ENCODE measurements at regions of chr22 and their contacts with region 1.

Region 1: GRCh38 chr22:28488825-28489224 is 190.8 kb downstream of the TTC28 start:
- DNase-seq: no peak
- ATAC-seq: no peak
- H3K4me3 ChIP-seq: no peak overlapping the region
- H3K27ac ChIP-seq: no peak overlapping the region
- H3K4me1 ChIP-seq: no peaks in the 10 kb centered on the region
- H3K27me3 ChIP-seq: no peaks in the 10 kb centered on the region
- CTCF ChIP-seq: no peak
- POLR2A ChIP-seq: no peak

Region 2: GRCh38 chr22:28448625-28449024 is 40.2 kb before region 1 on chr22:
- intact Hi-C with region 1: loop called in 1 of 10 experiments (anchors 2 kb)
- DNase-seq: no peak
- ATAC-seq: no peak
- H3K4me3 ChIP-seq: no peak overlapping the region
- H3K27ac ChIP-seq: no peak overlapping the region
- H3K4me1 ChIP-seq: peaks cover 0 to 13% (median under 1%) of the 10 kb centered on the region in 12 donors
- H3K27me3 ChIP-seq: no peaks in the 10 kb centered on the region
- CTCF ChIP-seq: no peak
- POLR2A ChIP-seq: no peak

Region 3: DNA sequence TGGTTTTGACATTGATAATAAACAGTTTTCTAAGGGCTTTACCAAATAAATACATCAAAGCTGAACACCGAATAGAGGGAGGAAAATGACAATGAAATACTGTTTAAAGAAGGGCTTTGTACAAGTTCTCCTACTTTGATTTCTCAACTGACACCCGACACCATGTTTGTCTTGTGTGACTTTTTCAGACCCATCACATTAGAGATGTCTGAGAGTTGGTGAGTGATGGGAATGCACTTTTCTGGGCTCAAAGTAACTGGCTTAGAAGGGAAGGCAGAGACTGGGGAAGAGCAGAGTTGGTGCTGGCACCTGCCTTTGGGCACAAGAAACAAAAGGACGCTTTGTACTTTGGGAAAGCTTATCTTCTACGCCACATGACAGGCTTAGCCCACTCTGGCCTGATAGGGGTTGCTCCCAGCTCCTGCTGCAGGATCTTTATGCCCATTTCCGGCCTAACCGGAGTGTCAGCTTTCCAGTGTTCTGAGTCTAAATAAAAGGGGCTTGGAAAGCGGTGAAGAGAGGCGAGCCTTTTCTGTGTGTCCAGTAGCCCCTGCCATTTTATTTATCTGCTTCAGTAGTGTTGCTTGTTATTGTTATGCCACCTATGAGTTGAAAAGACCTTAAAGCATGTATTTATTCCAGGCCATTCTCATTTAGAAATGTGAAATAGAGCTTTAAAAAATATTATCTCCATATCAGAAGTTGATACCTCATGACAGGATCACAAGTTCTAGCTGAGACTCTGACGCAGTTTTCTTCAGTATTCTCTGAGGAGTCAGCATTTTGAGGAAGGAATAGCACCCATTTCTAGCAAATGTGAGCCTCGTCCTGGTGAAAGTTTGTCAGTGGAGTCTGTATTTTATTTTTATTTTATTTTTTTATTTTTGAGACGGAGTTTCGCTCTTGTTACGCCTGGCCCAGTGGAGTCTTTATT is 608.2 kb after region 1 on chr22:
- intact Hi-C with region 1: no loop called
- DNase-seq: peak in 4 of 5 donors; percentile 27 to 60 (median 38)
- ATAC-seq: peak; percentile 74 to 91 (median 88)
- H3K4me3 ChIP-seq: no peak overlapping the region
- H3K27ac ChIP-seq: peak overlapping the region in 10 of 12 donors; percentile 17 to 79 (median 54)
- H3K4me1 ChIP-seq: peaks cover 0 to 46% (median 18%) of the 10 kb centered on the region in 12 donors
- H3K27me3 ChIP-seq: no peaks in the 10 kb centered on the region
- CTCF ChIP-seq: no peak
- POLR2A ChIP-seq: no peak

Measured in heart left ventricle (tissue), 16 donors.